Naive thymus-derived CD8-positive, alpha-beta T cell (primary cell): ENCODE measurements at regions of chr12 and their contacts with region 1.

Region 1: DNA sequence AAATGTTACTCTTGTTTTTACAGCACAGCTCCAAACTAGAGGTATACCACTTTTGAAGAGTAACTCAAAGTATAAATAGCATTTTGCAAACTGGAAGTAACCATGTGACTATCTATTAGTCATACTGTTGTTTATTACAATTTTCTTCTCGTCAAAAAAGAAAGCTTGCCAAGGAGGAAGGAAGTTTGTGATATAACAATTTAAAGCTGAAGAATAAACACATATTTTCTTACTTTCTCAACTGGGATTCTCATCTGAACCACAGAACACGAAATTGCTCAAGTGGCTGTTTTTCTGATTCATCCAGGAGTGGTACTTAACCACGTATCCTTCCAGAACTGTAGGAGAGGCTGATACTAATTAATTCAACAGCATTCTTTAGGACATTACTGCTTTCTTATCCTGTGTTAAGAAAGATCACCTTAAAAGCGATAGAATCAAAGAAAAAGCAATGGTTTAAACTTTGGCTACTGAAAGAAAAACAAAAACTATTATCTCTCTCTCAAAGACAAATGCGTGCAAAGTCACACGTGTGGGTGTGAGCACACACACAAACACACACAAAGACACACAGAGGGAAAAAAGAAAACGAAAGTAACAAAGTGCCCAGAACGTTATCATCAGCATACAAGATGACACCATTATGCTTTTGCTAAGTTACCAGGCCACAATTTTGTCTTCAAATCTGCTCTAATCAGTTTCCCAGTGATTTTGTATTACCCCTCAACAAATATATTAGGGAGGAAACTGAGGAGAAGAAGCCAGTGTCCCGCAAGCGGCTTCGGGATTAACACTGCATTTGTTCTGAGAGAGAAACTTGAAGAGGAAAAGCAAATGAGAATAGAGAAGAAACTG is at the start of gene CLEC2B:
- DNase-seq: peak in 5 of 10 donors; percentile 26 to 66 (median 61)
- ATAC-seq: peak; percentile 65 to 77
- H3K4me3 Mint-ChIP-seq: peak within 1 kb of the TSS; percentile 89 to 96 (median 90)
- H3K27ac Mint-ChIP-seq: peak within 1 kb of the TSS; percentile 96 to 100 (median 98)
- H3K4me1 Mint-ChIP-seq: peaks cover 21 to 50% (median 28%) of the 10 kb centered on the region in 4 donors
- H3K27me3 Mint-ChIP-seq: no peaks in the 10 kb centered on the region
- polyA plus RNA-seq, gene CLEC2B: 36.8 to 78.4 (median 41.9) TPM

Region 2: GRCh38 chr12:9813821-9814809 is 55.4 kb before region 1 on chr12:
- POLR2A ChIA-PET with region 1: interaction called, 16 read pairs
- DNase-seq: peak; percentile 86 to 95 (median 94)
- ATAC-seq: peak; percentile 96 to 98
- H3K4me3 Mint-ChIP-seq: peak overlapping the region; percentile 87 to 97 (median 92)
- H3K27ac Mint-ChIP-seq: peak overlapping the region; percentile 76 to 98 (median 94)
- H3K4me1 Mint-ChIP-seq: peaks cover 12 to 22% (median 15%) of the 10 kb centered on the region in 4 donors
- H3K27me3 Mint-ChIP-seq: peaks cover 0 to 4% (median 0%) of the 10 kb centered on the region in 5 donors

Region 3: GRCh38 chr12:9827209-9827888 is 42.2 kb before region 1 on chr12 and contains the start of gene KLRF1:
- POLR2A ChIA-PET with region 1: no interaction called
- DNase-seq: peak in 1 of 10 donors; percentile 15
- ATAC-seq: no peak
- H3K4me3 Mint-ChIP-seq: peak within 1 kb of the TSS in 4 of 10 donors; percentile 19 to 85 (median 58)
- H3K27ac Mint-ChIP-seq: peak within 1 kb of the TSS in 4 of 10 donors; percentile 0 to 81 (median 30)
- H3K4me1 Mint-ChIP-seq: peaks cover 0 to 6% (median 0%) of the 10 kb centered on the region in 4 donors
- H3K27me3 Mint-ChIP-seq: no peaks in the 10 kb centered on the region
- polyA plus RNA-seq, gene KLRF1: 0.83 to 83.4 (median 0.92) TPM

Region 4: GRCh38 chr12:9906873-9907272 is 37.3 kb after region 1 on chr12:
- POLR2A ChIA-PET with region 1: interaction called, 26 read pairs
- DNase-seq: peak in 9 of 10 donors; percentile 4 to 80 (median 59)
- ATAC-seq: peak; percentile 98 to 99
- H3K4me3 Mint-ChIP-seq: peak overlapping the region; percentile 51 to 83 (median 75)
- H3K27ac Mint-ChIP-seq: peak overlapping the region; percentile 45 to 94 (median 90)
- H3K4me1 Mint-ChIP-seq: peaks cover 17 to 42% (median 39%) of the 10 kb centered on the region in 4 donors
- H3K27me3 Mint-ChIP-seq: no peaks in the 10 kb centered on the region